H1 (cell line): ENCODE measurements at regions of chr7 and their contacts with region 1.

Region 1: DNA sequence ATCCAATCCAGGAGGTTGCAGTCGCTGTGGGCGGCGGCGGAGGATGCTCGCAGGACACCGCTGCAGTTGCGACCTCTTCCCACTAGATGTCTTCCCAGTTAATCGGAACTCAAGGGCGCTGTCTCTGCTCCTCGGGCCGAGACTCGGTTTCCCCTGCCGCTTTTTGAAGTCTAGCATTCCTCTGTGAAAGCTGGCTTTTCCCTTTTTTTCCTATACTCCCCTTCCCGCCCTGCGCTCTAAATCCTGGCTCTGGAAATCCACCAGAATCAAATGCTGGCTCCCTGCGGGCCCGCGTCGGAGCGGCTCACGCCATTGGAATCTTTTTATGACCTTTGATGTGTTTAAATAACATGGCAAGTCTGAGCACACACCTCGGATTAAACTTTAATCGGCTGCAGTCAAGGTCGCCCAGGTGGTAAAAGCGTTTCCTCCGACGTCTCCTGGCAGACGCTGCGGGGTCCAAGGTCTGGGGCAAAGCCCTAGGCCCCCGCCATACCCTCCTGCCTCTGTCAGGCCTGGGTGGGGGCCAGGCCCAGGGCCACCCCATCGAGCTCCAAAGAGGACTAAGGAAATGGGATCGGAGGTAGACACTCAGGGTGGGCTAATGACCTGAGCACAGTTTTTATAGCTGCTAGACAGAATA is 10.7 kb upstream of the HOXA13 start:
- DNase-seq: peak in 1 of 2 experiments; percentile 86
- H3K4me3 ChIP-seq: no peak overlapping the region
- H3K27ac ChIP-seq: no peak overlapping the region
- H3K4me1 ChIP-seq: peaks cover 6 to 17% (median 12%) of the 10 kb centered on the region in 4 experiments
- H3K27me3 ChIP-seq: peaks cover 96 to 100% (median 99%) of the 10 kb centered on the region in 4 experiments
- CTCF ChIP-seq: peak; percentile 74 to 81 (median 80)
- EP300 ChIP-seq: no peak
- POLR2A ChIP-seq: no peak
- RAD21 ChIP-seq: peak; percentile 79 to 84

Region 2: GRCh38 chr7:26675143-26675887 is 535.2 kb before region 1 on chr7:
- CTCF ChIA-PET with region 1: no interaction called
- POLR2A ChIA-PET with region 1: no interaction called
- DNase-seq: no peak
- H3K4me3 ChIP-seq: no peak overlapping the region
- H3K27ac ChIP-seq: no peak overlapping the region
- H3K4me1 ChIP-seq: no peaks in the 10 kb centered on the region
- H3K27me3 ChIP-seq: no peaks in the 10 kb centered on the region
- CTCF ChIP-seq: no peak
- EP300 ChIP-seq: no peak
- POLR2A ChIP-seq: no peak
- RAD21 ChIP-seq: no peak

Region 3: GRCh38 chr7:27179503-27180430 is 30.8 kb before region 1 on chr7:
- CTCF ChIA-PET with region 1: interaction called, 64 read pairs
- POLR2A ChIA-PET with region 1: no interaction called
- DNase-seq: peak in 1 of 2 experiments; percentile 93
- H3K4me3 ChIP-seq: peak overlapping the region in 1 of 4 experiments; percentile 8; a peak in 1 of 8 replicates
- H3K27ac ChIP-seq: no peak overlapping the region
- H3K4me1 ChIP-seq: peaks cover 1 to 4% (median 3%) of the 10 kb centered on the region in 4 experiments; a peak in 6 of 7 replicates
- H3K27me3 ChIP-seq: peaks cover 98 to 100% (median 100%) of the 10 kb centered on the region in 4 experiments
- CTCF ChIP-seq: peak; percentile 74 to 83 (median 80)
- EP300 ChIP-seq: 0 out of 3 replicates have a peak, but pooled peaks of 1 of the 2 experiments have one; percentile 17
- POLR2A ChIP-seq: no peak
- RAD21 ChIP-seq: peak; percentile 31 to 48; a peak in 3 of 4 replicates

Region 4: DNA sequence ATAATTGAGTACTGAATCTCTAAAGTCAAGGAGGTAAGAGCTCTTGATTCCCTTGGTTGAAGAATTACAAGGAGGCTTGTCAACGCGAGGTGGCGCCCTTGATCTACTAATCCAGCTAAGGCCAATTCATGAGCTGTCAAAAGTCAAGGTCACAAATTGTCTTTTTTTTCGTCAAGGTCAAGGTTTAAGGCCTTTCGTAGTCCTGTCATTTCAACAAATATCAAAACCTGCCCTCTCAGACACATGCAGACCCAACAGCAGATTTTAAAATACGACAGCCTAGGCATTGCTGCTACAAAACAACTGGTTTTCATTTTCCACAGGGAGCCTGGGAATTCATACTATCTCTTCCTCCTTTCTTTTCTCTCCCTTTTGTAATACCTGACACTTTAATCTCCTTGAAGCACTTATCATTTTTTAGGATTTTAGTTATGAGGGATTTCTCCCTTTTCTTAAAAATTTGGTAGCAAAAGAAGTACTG is 14.2 kb before region 1 on chr7:
- CTCF ChIA-PET with region 1: interaction called, 64 read pairs
- POLR2A ChIA-PET with region 1: interaction called, 5 read pairs
- DNase-seq: peak in 1 of 2 experiments; percentile 90
- H3K4me3 ChIP-seq: no peak overlapping the region
- H3K27ac ChIP-seq: no peak overlapping the region
- H3K4me1 ChIP-seq: peaks cover 0 to 6% (median 4%) of the 10 kb centered on the region in 4 experiments; a peak in 4 of 7 replicates
- H3K27me3 ChIP-seq: peaks cover 83 to 100% (median 95%) of the 10 kb centered on the region in 4 experiments
- CTCF ChIP-seq: peak; percentile 9 to 82 (median 76)
- EP300 ChIP-seq: no peak
- POLR2A ChIP-seq: no peak
- RAD21 ChIP-seq: peak; percentile 96 to 97

Region 5: GRCh38 chr7:27224983-27225934 is 14.7 kb after region 1 on chr7:
- CTCF ChIA-PET with region 1: interaction called, 62 read pairs
- POLR2A ChIA-PET with region 1: interaction called, 3 read pairs
- DNase-seq: peak in 1 of 2 experiments; percentile 66
- H3K4me3 ChIP-seq: peak overlapping the region; percentile 3 to 49 (median 12); a peak in 5 of 8 replicates
- H3K27ac ChIP-seq: no peak overlapping the region
- H3K4me1 ChIP-seq: peaks cover 2 to 9% (median 3%) of the 10 kb centered on the region in 4 experiments
- H3K27me3 ChIP-seq: peaks cover 54 to 96% (median 88%) of the 10 kb centered on the region in 4 experiments
- CTCF ChIP-seq: no peak
- EP300 ChIP-seq: no peak
- POLR2A ChIP-seq: no peak
- RAD21 ChIP-seq: no peak

Region 6: GRCh38 chr7:27235387-27236311 is 25.1 kb after region 1 on chr7:
- CTCF ChIA-PET with region 1: interaction called, 57 read pairs
- POLR2A ChIA-PET with region 1: no interaction called
- DNase-seq: peak in 1 of 2 experiments; percentile 86
- H3K4me3 ChIP-seq: peak overlapping the region; percentile 9 to 60 (median 37); a peak in 7 of 8 replicates
- H3K27ac ChIP-seq: no peak overlapping the region
- H3K4me1 ChIP-seq: peaks cover 2 to 11% (median 7%) of the 10 kb centered on the region in 4 experiments
- H3K27me3 ChIP-seq: peaks cover 67 to 87% (median 78%) of the 10 kb centered on the region in 4 experiments
- CTCF ChIP-seq: peak; percentile 61 to 74 (median 62)
- EP300 ChIP-seq: peak in 1 of 2 experiments; percentile 46; a peak in 1 of 3 replicates
- POLR2A ChIP-seq: no peak
- RAD21 ChIP-seq: peak; percentile 83 to 87

Region 7: GRCh38 chr7:27245798-27246691 is 35.5 kb after region 1 on chr7:
- CTCF ChIA-PET with region 1: interaction called, 57 read pairs
- POLR2A ChIA-PET with region 1: no interaction called
- DNase-seq: peak in 1 of 2 experiments; percentile 82
- H3K4me3 ChIP-seq: peak overlapping the region in 1 of 4 experiments; percentile 46; a peak in 2 of 8 replicates
- H3K27ac ChIP-seq: no peak overlapping the region
- H3K4me1 ChIP-seq: peaks cover 5 to 46% (median 21%) of the 10 kb centered on the region in 4 experiments
- H3K27me3 ChIP-seq: peaks cover 100% of the 10 kb centered on the region in 4 experiments
- CTCF ChIP-seq: no peak
- EP300 ChIP-seq: no peak
- POLR2A ChIP-seq: no peak
- RAD21 ChIP-seq: peak in 1 of 2 experiments; percentile 3; a peak in 1 of 4 replicates

Region 8: DNA sequence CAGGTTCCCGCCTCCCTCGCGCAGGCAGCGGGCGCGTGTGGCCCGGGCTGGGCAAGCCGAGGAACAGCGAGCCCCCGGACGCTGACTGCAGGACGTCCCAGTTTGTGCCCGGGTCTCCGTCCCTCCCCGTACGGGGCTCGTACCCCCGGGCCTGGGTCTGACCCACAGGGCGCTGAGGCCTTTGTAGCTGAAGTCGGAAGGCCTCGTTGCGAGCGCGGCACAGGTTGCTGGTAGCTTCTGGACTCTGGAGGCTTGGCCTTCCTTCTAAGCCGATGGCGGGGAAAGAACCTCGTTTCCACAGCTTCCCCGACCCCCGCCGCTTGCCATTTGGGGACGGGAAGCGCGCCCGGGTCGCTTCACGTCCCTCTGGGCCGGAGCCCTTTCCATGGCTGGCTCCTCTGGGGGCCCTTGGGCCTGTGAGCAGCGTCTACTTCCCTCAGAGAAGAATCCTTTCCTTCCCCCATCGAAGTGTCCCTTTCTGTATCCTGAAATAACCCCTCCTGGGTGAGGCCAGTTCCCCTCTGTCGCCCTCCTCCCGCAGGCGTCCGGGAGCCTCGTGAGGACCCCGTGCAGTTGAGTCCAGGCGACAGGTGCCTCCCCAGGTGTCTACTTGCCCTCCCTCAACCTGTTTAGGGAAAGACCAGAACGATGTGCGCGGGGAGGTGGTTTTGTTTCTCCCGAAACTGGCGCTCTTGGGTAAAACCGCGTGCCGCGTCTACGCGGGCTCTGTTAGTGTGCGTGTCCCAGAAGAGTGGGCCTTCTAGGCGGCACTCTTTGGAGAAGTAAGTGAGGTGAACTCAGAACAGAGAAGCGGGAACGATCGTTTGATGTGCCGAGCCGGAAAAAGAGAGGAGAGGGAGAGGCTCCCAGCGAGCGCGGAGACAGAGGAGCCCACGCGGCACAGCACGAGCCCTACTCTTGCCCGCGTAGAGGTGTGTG is 41.4 kb after region 1 on chr7:
- CTCF ChIA-PET with region 1: interaction called, 14 read pairs
- POLR2A ChIA-PET with region 1: no interaction called
- DNase-seq: peak in 1 of 2 experiments; percentile 79
- H3K4me3 ChIP-seq: peak overlapping the region in 2 of 4 experiments; percentile 10 to 43; a peak in 3 of 8 replicates
- H3K27ac ChIP-seq: no peak overlapping the region
- H3K4me1 ChIP-seq: peaks cover 0 to 12% (median 6%) of the 10 kb centered on the region in 4 experiments; a peak in 4 of 7 replicates
- H3K27me3 ChIP-seq: peaks cover 82 to 86% (median 85%) of the 10 kb centered on the region in 4 experiments
- CTCF ChIP-seq: no peak
- EP300 ChIP-seq: no peak
- POLR2A ChIP-seq: no peak
- RAD21 ChIP-seq: no peak